ENCODE measurements at regions of chr3 and their contacts with region 1.

Region 1: GRCh38 chr3:99659032-99659431 is 20.6 kb downstream of the COL8A1 start:
- DNase-seq: no peak
- ATAC-seq: no peak
- H3K4me3 ChIP-seq: no peak overlapping the region
- H3K27ac ChIP-seq: no peak overlapping the region
- H3K4me1 ChIP-seq: no peaks in the 10 kb centered on the region
- H3K27me3 ChIP-seq: no peaks in the 10 kb centered on the region
- CTCF ChIP-seq: no peak
- EP300 ChIP-seq: no peak
- POLR2A ChIP-seq: no peak
- RAD21 ChIP-seq: no peak

Region 2: GRCh38 chr3:99630815-99631214 is 28.2 kb before region 1 on chr3:
- CTCF ChIA-PET with region 1: no interaction called
- POLR2A ChIA-PET with region 1: no interaction called
- RAD21 ChIA-PET with region 1: no interaction called
- SMC1A ChIA-PET with region 1: no interaction called
- in situ Hi-C with region 1: no loop called
- intact Hi-C with region 1: no loop called
- DNase-seq: no peak
- ATAC-seq: no peak
- H3K4me3 ChIP-seq: no peak overlapping the region
- H3K27ac ChIP-seq: no peak overlapping the region
- H3K4me1 ChIP-seq: no peaks in the 10 kb centered on the region
- H3K27me3 ChIP-seq: no peaks in the 10 kb centered on the region
- CTCF ChIP-seq: no peak
- EP300 ChIP-seq: no peak
- POLR2A ChIP-seq: no peak
- RAD21 ChIP-seq: no peak

Region 3: DNA sequence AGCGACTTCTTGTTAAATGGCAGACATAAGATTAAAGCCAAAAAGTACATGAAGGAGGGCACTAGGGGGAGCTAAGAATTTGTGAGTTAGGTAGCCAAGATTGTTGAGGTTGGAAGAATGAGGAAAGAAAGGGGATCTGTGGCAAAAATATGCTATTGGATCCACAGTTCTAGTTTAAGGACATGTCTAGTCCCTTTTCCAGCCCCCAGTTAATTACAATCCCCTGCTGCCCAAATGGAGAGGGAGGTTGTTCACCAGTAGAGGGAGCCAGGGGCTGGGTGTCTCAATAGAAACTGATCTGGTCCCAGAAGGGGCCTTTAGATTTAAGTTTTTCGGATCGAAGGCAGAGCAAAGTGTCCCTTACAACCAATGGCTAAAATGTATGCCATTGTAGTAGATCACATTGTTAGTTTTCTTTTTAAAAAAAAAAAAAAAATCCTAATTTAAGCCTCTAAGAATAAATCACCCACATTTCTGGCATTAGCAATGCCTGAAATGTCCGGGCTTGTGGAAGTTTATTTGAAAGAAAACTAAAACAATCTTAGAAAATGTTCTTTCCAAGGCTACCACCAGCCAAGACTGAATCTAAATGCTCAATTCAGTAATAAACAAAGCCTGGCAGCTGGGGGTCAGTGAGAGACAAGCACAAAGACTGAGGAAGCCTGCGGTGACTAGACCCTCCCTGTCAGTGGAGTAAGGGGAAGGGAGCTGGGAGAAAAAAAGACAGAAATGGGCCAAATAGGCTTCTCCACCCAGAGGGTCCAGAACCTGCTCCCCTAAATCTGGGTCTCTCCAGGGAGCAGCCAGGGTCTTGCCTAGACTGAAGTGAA is 13.5 kb before region 1 on chr3:
- CTCF ChIA-PET with region 1: interaction called, 30 read pairs
- POLR2A ChIA-PET with region 1: no interaction called
- RAD21 ChIA-PET with region 1: interaction called, 3 read pairs
- SMC1A ChIA-PET with region 1: interaction called, 9 read pairs
- in situ Hi-C with region 1: no loop called
- intact Hi-C with region 1: no loop called
- DNase-seq: no peak
- ATAC-seq: peak; percentile 70
- H3K4me3 ChIP-seq: no peak overlapping the region
- H3K27ac ChIP-seq: no peak overlapping the region
- H3K4me1 ChIP-seq: no peaks in the 10 kb centered on the region
- H3K27me3 ChIP-seq: peaks cover 0 to 2% of the 10 kb centered on the region in 2 experiments; a peak in 1 of 4 replicates
- CTCF ChIP-seq: peak; percentile 28 to 69 (median 68)
- EP300 ChIP-seq: no peak
- POLR2A ChIP-seq: no peak
- RAD21 ChIP-seq: peak; percentile 45

Region 4: DNA sequence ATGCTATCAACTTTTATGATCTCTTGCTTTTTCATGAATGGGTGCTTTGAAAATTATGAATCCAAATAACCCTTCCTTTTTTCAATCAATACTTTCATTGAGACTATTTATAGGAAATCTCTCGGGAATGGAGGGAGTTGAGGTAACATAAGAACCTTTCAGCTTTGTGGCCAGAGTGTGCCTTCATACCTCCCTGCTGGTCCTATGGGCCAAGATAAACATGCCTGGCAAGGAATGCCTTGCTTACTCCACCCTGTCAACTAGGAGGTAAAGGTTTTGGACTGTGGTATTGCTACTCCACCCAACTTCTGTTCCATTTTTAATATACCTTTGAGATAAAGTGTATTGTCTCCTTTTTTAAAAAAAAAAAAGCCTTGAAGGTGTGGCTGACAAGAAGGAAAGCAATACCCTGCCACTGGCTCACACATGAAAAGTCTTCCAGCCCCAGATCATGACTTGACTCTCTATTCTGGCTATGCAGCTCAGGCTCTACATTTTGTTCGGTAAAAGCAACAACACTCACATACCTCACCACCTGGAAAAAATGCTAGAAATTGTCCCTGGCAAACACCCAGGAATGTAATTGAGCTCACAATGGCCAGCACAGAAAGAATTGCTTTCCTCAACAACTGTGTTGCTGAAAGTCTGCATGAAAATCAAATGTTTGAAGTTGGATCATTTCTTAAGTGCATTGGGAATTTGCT is 15.2 kb after region 1 on chr3:
- CTCF ChIA-PET with region 1: interaction called, 3 read pairs
- POLR2A ChIA-PET with region 1: interaction called, 3 read pairs
- RAD21 ChIA-PET with region 1: no interaction called
- SMC1A ChIA-PET with region 1: no interaction called
- in situ Hi-C with region 1: no loop called
- intact Hi-C with region 1: loop called (anchors 2 kb)
- DNase-seq: no peak
- ATAC-seq: no peak
- H3K4me3 ChIP-seq: no peak overlapping the region
- H3K27ac ChIP-seq: no peak overlapping the region
- H3K4me1 ChIP-seq: no peaks in the 10 kb centered on the region
- H3K27me3 ChIP-seq: no peaks in the 10 kb centered on the region
- CTCF ChIP-seq: no peak
- EP300 ChIP-seq: no peak
- POLR2A ChIP-seq: no peak
- RAD21 ChIP-seq: no peak

Measured in GM12878 (cell line).